GM12878 (cell line): ENCODE measurements at regions of chr15 and their contacts with region 1.

Region 1: DNA sequence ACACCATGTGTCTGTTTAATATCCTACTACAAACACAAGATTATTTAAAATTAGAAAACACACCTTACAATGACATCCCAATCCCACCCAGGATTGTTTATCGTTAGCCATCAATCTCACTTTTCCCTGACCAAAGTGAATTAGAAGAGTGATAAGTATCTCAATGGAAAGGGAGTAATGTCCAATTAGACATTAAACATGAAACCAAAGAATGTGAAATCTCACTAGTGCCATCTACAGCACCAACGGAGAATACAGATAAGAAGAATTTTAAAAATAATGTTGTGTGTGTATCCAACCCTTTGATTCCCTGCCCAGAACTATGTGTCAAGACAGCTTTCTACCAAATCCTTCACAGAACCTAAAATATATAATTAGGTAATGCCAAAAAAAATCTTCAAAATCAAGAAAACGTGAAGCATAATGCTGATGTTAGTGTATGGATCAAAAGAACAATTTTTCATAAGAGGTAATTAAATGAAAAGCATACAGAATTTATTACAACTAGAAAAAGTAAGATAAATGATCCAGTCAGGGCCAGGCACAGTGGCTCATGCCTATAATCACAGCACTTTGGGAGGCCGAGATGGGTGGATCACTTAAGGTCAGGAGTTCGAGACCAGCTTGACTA is 64.2 kb downstream of the SCAPER start:
- DNase-seq: no peak
- ATAC-seq: peak; percentile 72
- H3K4me3 ChIP-seq: no peak overlapping the region
- H3K27ac ChIP-seq: no peak overlapping the region
- H3K4me1 ChIP-seq: peaks cover 10% of the 10 kb centered on the region; the same call in 1 of the 2 replicates
- H3K27me3 ChIP-seq: no peaks in the 10 kb centered on the region
- CTCF ChIP-seq: peak; percentile 48 to 57 (median 49); a peak in 4 of 6 replicates
- EP300 ChIP-seq: no peak
- POLR2A ChIP-seq: no peak
- RAD21 ChIP-seq: peak; percentile 70

Region 2: GRCh38 chr15:76345880-76346668 is 494.9 kb before region 1 on chr15:
- CTCF ChIA-PET with region 1: no interaction called
- POLR2A ChIA-PET with region 1: no interaction called
- RAD21 ChIA-PET with region 1: no interaction called
- SMC1A ChIA-PET with region 1: no interaction called
- in situ Hi-C with region 1: no loop called
- intact Hi-C with region 1: loop called (anchors 5 kb)
- DNase-seq: no peak
- ATAC-seq: peak; percentile 80
- H3K4me3 ChIP-seq: peak overlapping the region; percentile 68
- H3K27ac ChIP-seq: no peak overlapping the region
- H3K4me1 ChIP-seq: peaks cover 11% of the 10 kb centered on the region; the same call in 1 of the 2 replicates
- H3K27me3 ChIP-seq: peaks cover 15 to 35% of the 10 kb centered on the region in 2 experiments
- CTCF ChIP-seq: no peak
- EP300 ChIP-seq: no peak
- POLR2A ChIP-seq: no peak
- RAD21 ChIP-seq: no peak

Region 3: GRCh38 chr15:76642671-76643070 is 198.3 kb before region 1 on chr15:
- CTCF ChIA-PET with region 1: interaction called, 26 read pairs
- POLR2A ChIA-PET with region 1: no interaction called
- RAD21 ChIA-PET with region 1: interaction called, 12 read pairs
- SMC1A ChIA-PET with region 1: interaction called, 3 read pairs
- in situ Hi-C with region 1: no loop called
- intact Hi-C with region 1: loop called (anchors 5 kb)
- DNase-seq: no peak
- ATAC-seq: no peak
- H3K4me3 ChIP-seq: no peak overlapping the region
- H3K27ac ChIP-seq: no peak overlapping the region
- H3K4me1 ChIP-seq: no peaks in the 10 kb centered on the region
- H3K27me3 ChIP-seq: no peaks in the 10 kb centered on the region
- CTCF ChIP-seq: peak; percentile 19 to 39 (median 23); a peak in 3 of 6 replicates
- EP300 ChIP-seq: no peak
- POLR2A ChIP-seq: no peak
- RAD21 ChIP-seq: peak; percentile 36; the same call in 1 of the 2 replicates